PC-9 (cell line): ENCODE measurements at regions of chr6 and their contacts with region 1.

Region 1: DNA sequence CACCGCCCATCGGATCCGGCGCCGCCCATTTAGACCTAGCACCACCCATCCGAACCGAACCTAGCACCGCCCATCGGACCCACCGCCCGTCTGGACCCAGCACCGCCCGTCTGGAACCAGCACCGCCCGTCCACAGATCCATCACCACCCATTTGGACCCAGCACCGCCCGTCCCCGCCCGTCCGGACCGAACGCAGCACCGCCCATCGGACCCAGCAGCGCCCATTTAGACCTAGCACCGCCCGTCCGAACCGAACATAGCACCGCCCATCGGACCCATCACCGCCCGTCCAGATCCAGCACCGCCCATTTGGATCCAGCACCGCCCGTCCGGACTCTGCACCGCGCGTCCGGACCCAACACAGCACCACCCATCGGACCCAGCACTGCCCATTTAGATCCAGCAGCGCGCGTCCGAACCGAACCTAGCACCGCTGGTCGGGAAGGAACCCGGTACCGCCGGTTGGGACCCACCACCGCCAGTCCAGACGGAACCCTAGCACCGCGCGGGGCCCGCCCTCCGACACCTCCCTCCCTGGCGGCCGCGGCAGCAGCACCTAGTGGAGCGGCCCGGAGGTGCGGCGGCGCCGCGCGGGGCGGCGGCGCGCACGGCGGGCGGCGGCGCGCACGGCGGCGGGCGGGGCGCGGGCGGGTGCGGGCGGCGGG is 348 bp upstream of the AFDN start:
- DNase-seq: peak in 1 of 2 experiments; percentile 43
- H3K4me3 ChIP-seq: peak overlapping the region; percentile 91
- H3K27ac ChIP-seq: no peak overlapping the region
- H3K4me1 ChIP-seq: peaks cover 31% of the 10 kb centered on the region
- H3K27me3 ChIP-seq: no peaks in the 10 kb centered on the region
- CTCF ChIP-seq: peak; percentile 51

Region 2: DNA sequence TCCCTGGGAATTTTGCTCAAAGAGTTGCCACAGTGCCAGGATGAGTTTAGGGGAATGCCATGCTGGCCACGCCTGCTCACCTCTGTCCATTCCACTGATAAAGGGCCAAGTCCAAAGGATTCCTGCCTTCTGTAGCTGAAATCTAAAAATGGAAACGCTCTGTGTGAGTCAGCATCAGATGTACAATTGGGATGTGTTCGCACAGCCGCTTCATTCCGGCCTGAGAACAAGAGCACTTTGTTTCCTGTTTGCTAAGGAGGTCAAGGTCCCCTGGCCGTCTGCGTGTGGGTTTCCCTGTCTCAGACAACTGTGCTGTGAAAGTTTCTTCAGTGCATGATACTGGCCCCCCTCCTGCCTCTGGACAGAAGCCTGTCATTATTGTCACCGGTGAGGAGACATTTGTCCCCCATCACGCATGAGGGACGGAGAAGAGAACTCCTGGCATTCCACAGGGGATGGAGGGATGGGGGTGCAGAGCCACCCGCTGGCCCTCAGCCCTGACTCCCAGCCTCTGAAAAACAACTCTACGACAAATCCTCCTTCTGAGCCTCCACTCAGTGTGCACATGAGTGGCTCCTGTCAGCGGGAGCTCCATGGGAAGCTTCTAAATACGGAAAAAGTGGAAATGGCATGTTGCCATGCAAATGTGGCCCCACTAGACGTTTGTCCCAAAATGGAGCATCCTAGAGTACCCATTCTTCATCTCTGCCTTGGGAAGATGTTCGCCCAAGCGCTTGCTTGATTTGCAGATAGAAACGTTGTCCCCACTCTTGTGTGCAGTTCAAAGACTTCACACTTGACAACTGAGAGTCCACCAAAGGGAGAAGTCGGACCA is 143.1 kb before region 1 on chr6:
- CTCF ChIA-PET with region 1: no interaction called
- POLR2A ChIA-PET with region 1: no interaction called
- intact Hi-C with region 1: no loop called
- DNase-seq: peak; percentile 12 to 37
- H3K4me3 ChIP-seq: no peak overlapping the region
- H3K27ac ChIP-seq: no peak overlapping the region
- H3K4me1 ChIP-seq: no peaks in the 10 kb centered on the region
- H3K27me3 ChIP-seq: peaks cover 80% of the 10 kb centered on the region
- CTCF ChIP-seq: no peak

Region 3: DNA sequence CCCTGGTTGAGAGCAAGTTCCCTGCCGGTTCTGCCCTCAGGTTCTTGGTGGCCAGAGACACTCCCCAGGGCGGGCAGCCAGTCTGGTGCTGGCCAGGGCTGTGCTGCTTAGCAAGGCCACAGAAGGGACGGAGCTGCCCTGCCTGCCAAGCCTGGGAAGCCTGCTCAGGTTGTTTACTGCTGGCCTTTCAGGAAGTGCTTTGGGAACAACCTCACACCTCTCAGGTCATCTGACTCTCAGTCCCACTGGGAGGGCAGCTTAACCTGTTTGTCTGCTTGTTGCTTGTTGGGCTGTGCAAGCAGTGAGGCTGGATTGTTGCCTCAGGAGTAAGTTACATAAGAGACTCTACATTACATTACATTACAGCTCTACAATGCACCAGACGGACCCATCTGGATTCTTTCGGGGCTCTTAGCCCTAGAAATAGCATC is 75.4 kb before region 1 on chr6:
- CTCF ChIA-PET with region 1: no interaction called
- POLR2A ChIA-PET with region 1: no interaction called
- intact Hi-C with region 1: loop called (anchors 10 kb)
- DNase-seq: peak; percentile 76 to 97
- H3K4me3 ChIP-seq: no peak overlapping the region
- H3K27ac ChIP-seq: peak overlapping the region; percentile 54
- H3K4me1 ChIP-seq: peaks cover 16% of the 10 kb centered on the region
- H3K27me3 ChIP-seq: no peaks in the 10 kb centered on the region
- CTCF ChIP-seq: no peak

Region 4: GRCh38 chr6:167791001-167791779 is 35.2 kb before region 1 on chr6:
- CTCF ChIA-PET with region 1: no interaction called
- POLR2A ChIA-PET with region 1: no interaction called
- intact Hi-C with region 1: loop called (anchors 5 kb)
- DNase-seq: peak; percentile 34 to 81
- H3K4me3 ChIP-seq: no peak overlapping the region; the same call in 1 of the 2 replicates
- H3K27ac ChIP-seq: no peak overlapping the region
- H3K4me1 ChIP-seq: peaks cover 16% of the 10 kb centered on the region
- H3K27me3 ChIP-seq: no peaks in the 10 kb centered on the region
- CTCF ChIP-seq: no peak

Region 5: GRCh38 chr6:167849846-167850459 is 23.6 kb after region 1 on chr6:
- CTCF ChIA-PET with region 1: interaction called, 3 read pairs
- POLR2A ChIA-PET with region 1: no interaction called
- intact Hi-C with region 1: loop called (anchors 1 kb)
- DNase-seq: peak; percentile 37 to 94
- H3K4me3 ChIP-seq: peak overlapping the region; percentile 15; the same call in 1 of the 2 replicates
- H3K27ac ChIP-seq: peak overlapping the region; percentile 95
- H3K4me1 ChIP-seq: peaks cover 36% of the 10 kb centered on the region
- H3K27me3 ChIP-seq: no peaks in the 10 kb centered on the region
- CTCF ChIP-seq: no peak

Region 6: GRCh38 chr6:167892835-167893815 is 66.8 kb after region 1 on chr6:
- CTCF ChIA-PET with region 1: no interaction called
- POLR2A ChIA-PET with region 1: interaction called, 3 read pairs
- intact Hi-C with region 1: loop called (anchors 5 kb)
- DNase-seq: peak; percentile 7 to 43
- H3K4me3 ChIP-seq: no peak overlapping the region
- H3K27ac ChIP-seq: 0 out of 2 replicates have a peak overlapping the region, but pooled peaks have one; percentile 3
- H3K4me1 ChIP-seq: peaks cover 18% of the 10 kb centered on the region
- H3K27me3 ChIP-seq: no peaks in the 10 kb centered on the region
- CTCF ChIP-seq: no peak

Region 7: DNA sequence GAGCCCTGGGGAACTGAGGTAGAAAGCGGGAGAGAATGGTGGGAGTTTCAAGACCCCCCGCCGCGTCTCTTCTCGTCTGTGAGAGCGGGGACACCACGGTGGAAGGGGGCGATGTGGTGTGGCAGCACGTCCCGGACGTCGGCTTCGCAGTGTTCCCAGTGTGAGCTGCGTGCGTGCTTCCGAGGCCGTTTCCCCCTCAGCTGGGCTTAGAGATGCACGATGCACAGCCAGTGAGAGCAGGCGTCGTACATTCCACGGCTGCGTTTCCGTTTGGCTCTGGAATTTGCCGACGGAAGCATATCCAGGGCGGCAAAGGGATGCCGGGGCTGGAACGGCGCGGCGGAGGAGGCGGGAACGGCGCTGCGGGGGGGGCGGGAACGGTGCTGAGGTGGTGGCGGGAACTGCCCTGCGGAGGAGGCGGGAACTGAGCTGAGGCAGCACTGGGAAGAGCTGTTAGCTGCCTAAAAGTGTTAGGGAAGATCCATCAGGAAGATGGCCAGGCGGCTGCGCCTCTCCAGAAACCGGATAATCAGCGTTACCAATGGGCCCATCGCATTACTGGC is 208.8 kb after region 1 on chr6:
- CTCF ChIA-PET with region 1: no interaction called
- POLR2A ChIA-PET with region 1: no interaction called
- intact Hi-C with region 1: no loop called
- DNase-seq: no peak
- H3K4me3 ChIP-seq: no peak overlapping the region
- H3K27ac ChIP-seq: no peak overlapping the region
- H3K4me1 ChIP-seq: peaks cover 24% of the 10 kb centered on the region
- H3K27me3 ChIP-seq: peaks cover 18% of the 10 kb centered on the region
- CTCF ChIP-seq: no peak

Region 8: DNA sequence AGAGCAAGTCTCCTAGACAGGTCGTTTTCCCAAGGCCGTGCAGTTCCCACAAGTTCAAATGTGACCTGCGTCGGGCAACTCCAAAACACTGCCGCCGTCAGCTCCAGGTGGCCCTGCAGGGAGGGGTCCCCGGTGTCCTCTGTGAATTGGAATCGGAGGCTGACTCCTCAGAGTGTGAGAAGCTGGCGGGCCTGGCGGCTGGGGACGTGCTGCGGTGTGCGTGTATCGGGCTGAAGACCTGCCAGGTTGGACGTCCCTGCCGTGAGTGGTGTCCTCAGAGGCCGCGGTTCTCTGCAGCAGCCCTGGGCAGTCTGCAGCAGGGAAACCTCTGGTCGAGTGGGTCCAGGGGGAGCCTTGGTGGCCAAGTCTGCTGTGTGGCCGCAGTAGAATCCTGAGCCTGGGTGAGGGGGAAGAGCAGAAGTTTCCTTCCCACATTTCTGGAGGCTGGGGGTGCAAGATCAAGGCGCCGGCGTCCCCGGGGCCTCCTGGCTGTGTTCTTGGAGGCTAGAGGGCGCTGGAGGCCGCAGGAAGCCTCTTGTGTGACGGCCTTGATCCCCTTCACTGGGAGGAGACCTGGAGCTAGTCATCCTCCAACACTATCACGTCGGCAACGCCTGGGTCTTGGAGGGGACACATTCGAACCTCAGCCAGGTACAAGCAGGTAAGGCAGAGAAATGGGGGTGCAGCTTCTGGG is 367.8 kb after region 1 on chr6:
- CTCF ChIA-PET with region 1: no interaction called
- POLR2A ChIA-PET with region 1: no interaction called
- intact Hi-C with region 1: no loop called
- DNase-seq: no peak
- H3K4me3 ChIP-seq: no peak overlapping the region
- H3K27ac ChIP-seq: no peak overlapping the region
- H3K4me1 ChIP-seq: no peaks in the 10 kb centered on the region
- H3K27me3 ChIP-seq: peaks cover 92% of the 10 kb centered on the region
- CTCF ChIP-seq: no peak